ENCODE measurements at regions of chr3 and their contacts with region 1.

Region 1: DNA sequence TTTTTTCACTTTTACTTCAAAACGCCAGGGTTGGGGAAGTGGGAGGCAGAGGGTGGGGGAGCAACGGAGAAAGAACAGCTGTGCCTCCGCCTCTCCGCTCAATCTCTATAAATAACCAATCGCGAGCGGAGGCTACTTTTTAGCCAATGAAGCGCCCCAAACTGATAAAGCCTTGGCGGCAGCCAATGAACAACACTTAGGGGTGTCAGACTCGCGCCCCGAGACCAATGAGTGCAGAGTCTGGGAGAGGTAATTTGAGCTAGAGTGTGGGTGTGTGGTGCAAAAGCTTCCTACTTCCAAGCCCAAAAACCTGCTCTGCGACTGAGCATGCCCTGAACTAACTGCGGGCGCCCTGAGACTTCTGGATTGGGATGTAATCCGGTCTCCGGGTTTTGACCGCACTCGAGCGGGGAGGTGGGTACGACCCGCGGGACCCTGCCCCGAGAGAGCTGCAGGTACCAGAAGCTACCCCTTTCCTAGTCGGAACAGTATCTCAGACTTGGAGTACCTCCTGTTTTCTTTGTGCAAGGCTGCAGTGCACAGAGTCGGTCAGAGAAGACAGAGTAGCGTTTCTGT is 800 bp upstream of the RAP2B start:
- DNase-seq: peak; percentile 92
- ATAC-seq: peak; percentile 88
- H3K4me3 ChIP-seq: peak overlapping the region; percentile 92 to 98
- H3K27ac ChIP-seq: peak overlapping the region; percentile 93
- H3K4me1 ChIP-seq: peaks cover 28% of the 10 kb centered on the region
- H3K27me3 ChIP-seq: no peaks in the 10 kb centered on the region
- CTCF ChIP-seq: no peak

Region 2: DNA sequence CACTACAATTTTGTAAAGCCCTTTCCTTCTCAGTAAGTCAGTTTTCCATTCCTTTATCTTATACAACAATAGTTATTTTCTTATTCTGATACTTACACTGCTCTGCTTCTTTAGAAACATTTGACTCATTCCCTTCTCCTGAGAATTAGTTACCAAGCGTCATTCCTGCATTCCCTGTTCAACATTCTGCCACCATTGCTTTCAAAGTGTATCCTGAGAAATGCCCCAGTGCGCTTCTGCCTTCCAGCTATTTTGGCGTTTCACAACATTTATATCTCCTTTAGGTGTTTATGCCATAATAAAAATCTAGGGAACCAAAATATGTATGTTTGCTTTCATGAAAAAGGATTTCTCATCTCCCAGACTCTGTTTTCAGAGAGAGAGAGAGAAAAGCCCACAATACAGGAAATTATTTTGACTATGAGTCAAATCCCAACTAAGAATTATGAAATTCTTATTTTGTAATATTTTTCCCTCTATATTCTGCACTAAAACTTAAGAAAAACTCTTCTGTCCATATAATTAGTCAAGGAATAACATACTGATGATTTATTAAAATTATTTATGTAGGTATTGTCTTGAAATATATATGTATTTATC is 117.4 kb before region 1 on chr3:
- CTCF ChIA-PET with region 1: interaction called, 10 read pairs
- POLR2A ChIA-PET with region 1: no interaction called
- in situ Hi-C with region 1: no loop called
- intact Hi-C with region 1: loop called (anchors 2 kb)
- DNase-seq: no peak
- ATAC-seq: no peak
- H3K4me3 ChIP-seq: peak overlapping the region in 1 of 2 experiments; percentile 48; a peak in 1 of 4 replicates
- H3K27ac ChIP-seq: no peak overlapping the region
- H3K4me1 ChIP-seq: 0 out of 2 replicates have a peak, but pooled peaks cover 4% of the 10 kb centered on the region
- H3K27me3 ChIP-seq: no peaks in the 10 kb centered on the region
- CTCF ChIP-seq: no peak

Region 3: DNA sequence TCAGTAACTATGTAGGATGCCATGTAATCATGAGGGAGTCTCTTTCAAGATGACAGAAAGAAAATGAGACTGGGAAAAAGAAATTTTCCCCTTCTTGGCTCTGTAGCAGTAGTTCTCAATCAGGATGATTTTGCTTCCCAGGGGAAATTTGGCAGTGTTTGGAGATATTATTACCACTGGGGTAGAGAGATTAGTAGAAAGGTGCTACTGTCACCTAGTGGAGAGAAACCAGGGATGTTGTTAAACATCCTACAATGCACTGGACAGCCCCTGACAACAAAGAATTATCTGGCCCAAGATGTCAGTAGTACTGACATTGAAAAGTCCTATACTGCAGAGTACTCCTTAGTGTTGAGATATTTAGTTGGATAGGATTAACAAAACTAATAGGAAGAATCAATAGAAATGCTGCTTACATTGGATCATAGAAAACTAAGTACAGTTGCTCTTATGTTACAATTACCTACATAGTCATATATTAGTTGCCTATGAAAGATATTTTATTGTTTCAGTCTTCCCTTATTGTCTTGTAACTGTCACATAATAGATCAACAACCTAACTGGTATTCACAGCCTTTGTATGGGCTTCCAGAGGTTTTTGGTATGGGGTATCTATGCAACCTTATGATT is 434.1 kb after region 1 on chr3:
- CTCF ChIA-PET with region 1: no interaction called
- POLR2A ChIA-PET with region 1: no interaction called
- in situ Hi-C with region 1: no loop called
- intact Hi-C with region 1: loop called (anchors 10 kb)
- DNase-seq: peak; percentile 32
- ATAC-seq: peak; percentile 92
- H3K4me3 ChIP-seq: no peak overlapping the region
- H3K27ac ChIP-seq: no peak overlapping the region
- H3K4me1 ChIP-seq: no peaks in the 10 kb centered on the region
- H3K27me3 ChIP-seq: no peaks in the 10 kb centered on the region
- CTCF ChIP-seq: peak; percentile 79; the same call in 1 of the 2 replicates

Region 4: DNA sequence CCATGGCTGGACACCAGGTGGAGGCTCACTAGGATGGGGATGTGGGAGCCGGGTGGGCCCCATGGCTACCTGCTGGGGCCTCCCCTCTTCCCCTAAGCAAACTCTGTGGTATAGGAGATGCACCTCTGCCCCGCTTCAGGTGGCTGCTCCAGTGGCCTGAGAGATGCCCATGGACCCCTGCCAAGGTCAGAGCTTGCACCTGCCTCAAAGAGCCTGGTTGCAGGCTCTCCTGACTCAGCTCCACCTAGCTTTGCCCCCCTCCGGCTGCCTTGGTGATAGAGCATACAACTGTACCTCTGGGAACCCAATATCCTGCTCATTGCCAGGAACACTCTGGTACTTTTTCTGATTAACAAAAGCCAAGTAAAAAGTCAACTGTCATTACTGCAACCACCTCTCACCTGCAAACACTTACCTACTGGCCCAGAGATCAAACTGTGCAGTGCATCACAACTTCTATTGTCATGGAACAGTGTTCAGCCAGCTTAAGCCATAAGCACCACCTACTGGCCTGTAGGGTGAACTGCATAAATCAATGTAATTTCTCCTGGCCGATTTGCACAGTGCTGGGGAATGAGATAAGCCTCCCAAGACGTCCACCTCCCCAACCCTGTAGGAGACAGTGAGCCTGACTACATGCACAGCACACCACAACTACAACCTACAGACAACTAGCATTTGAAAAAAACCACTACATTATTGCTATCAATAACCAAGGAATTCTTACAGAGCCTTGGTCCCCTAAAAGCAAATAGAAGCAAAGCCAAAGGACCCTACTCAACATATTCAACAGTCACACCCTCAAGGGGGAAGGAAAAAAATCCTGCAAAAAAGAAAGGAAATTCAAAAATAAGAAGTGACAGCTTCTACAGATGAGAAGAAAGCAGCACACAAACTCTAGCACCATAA is 607.6 kb after region 1 on chr3:
- CTCF ChIA-PET with region 1: no interaction called
- POLR2A ChIA-PET with region 1: no interaction called
- in situ Hi-C with region 1: no loop called
- intact Hi-C with region 1: loop called (anchors 10 kb)
- DNase-seq: peak; percentile 39
- ATAC-seq: peak; percentile 93
- H3K4me3 ChIP-seq: no peak overlapping the region
- H3K27ac ChIP-seq: no peak overlapping the region
- H3K4me1 ChIP-seq: no peaks in the 10 kb centered on the region
- H3K27me3 ChIP-seq: no peaks in the 10 kb centered on the region
- CTCF ChIP-seq: peak; percentile 91